Posterior vena cava (tissue), 2 donors: ENCODE measurements at regions of chrX and their contacts with region 1.

Region 1: DNA sequence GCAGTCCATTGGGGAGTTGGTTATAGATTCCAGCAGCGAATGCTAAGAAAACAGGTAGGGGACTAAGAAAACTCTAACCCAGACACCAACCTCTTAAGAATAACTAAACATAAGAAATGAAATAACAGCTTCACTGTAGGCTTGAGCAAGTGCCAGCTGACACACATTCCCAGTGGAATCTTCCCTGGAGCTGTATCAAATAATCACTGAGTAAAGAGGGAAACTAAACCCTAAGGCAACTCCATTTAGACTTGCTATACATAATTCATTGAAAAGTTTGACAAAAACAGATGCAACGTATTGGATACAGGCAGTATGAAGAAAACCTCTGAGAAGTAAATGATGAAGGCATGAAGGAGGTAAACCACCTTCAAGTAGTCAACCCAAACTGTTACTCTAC is 293.5 kb downstream of the OPHN1 start:
- DNase-seq: no peak

Region 2: DNA sequence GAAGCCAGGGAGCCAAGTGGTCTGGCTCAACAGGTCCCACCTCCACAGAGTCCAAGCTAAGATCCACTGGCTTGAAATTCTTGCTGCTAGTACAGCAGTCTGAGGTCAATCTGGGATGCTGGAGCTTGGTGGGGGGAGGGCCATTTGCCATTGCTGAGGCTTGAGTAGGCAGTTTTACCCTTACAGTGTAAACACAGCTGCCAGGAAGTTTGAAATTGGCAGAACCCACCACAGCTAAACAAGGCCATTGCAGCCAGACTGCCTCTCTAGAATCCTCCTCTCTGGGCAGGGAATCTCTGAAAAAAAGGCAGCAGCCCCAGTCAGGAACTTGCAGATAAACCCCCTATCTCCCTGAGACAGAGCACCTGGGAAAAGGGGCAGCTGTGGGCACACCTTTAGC is 1585.8 kb before region 1 on chrX:
- intact Hi-C with region 1: loop called in 1 of 2 experiments (anchors 5 kb)
- DNase-seq: no peak

Region 3: DNA sequence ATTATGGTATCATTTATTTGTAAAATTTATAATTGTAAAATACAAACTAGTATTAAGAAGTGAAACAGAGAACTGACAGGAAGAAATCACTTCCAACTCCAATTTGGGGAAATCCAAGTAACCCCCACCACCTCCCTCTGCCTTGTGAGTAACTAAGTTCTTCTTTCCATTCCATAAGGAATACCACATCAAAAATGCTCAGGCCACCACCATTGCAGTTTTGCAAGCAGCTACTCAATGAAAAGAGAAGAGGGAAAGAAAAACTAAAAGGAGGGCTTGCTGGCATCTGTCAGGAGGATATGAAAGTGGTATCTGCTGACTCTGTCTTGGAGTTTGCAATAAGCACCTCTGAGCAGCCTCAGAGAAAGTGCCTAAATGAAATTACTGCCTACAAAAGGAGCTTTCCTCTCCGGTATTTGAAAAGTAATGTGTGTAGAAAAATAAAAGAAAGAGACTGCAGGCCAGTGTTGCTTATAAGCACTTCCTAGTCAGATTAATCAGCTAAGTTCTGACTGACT is 64.8 kb after region 1 on chrX:
- intact Hi-C with region 1: no loop called
- DNase-seq: no peak